ENCODE measurements at regions of chr4 and their contacts with region 1.

Region 1: DNA sequence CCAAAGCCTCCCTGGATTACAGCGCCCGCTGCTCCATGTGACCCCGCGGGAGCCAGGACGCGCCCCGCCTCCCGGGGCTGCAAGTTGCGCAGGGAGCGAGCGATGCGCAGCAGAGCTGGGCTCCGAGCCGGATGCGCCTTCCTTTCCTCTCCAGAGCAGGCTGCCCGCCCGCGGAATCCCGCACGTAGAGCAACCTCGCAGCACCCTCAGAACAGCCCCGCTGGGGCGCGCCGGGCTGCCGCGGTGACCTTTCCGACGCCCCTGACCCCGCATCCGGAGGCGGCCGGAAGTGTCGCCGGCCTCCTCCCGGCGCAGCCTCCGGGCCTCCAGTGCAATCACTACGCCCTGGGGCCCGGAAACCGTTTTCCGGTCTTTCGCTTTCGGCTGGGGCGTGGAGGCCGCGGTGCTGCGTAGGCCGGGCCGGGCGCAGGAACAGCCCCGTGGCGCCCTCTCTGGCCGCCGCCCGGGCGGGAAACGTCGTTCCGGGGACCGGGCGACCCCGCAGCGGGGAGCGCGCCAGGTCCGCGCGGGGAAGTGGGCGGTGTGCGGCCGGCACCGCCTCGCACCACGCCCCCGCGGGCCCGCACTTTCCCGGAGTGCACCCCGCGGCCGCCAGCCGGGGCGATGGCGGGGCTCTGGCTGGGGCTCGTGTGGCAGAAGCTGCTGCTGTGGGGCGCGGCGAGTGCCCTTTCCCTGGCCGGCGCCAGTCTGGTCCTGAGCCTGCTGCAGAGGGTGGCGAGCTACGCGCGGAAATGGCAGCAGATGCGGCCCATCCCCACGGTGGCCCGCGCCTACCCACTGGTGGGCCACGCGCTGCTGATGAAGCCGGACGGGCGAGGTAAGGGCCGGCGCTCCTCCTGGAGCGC is at the start of gene CYP4V2:
- DNase-seq: peak; percentile 58 to 96 (median 74)

Region 2: GRCh38 chr4:186144142-186144955 is 47.1 kb before region 1 on chr4:
- intact Hi-C with region 1: loop called (anchors 2 kb)
- DNase-seq: peak in 9 of 10 donors; percentile 26 to 88 (median 55)

Measured in posterior cingulate gyrus (tissue), 11 donors.